Endothelial cell of umbilical vein (primary cell): ENCODE measurements at regions of chr2 and their contacts with region 1.

Region 1: DNA sequence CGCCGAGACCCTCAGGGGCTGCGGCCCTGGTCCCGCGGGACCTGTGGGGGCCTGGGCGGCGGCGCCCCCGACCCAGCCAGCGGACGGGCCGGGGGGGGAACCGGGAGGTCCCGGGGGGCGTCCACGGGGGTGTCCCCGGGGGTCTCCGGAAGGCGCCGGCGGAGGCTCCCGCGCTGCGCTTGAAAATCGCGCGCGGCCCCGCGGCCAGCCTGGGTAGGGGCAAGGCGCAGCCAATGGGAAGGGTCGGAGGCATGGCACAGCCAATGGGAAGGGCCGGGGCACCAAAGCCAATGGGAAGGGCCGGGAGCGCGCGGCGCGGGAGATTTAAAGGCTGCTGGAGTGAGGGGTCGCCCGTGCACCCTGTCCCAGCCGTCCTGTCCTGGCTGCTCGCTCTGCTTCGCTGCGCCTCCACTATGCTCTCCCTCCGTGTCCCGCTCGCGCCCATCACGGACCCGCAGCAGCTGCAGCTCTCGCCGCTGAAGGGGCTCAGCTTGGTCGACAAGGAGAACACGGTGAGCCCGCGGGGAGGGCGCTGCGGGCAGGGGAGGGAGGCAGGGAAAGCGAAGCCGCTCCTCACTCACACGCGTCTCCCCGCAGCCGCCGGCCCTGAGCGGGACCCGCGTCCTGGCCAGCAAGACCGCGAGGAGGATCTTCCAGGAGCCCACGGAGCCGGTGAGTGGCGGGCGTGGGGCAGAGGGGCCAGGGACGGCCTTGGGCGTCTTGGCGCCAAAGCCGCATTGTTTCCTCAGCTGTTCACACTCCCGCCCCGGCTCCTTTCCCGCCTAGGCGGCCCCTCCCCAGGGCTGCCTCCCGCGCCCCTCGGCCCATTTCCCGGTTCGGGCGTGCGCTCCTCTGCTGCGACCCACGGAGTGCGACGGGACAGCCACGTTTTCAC is at the start of gene RRM2:
- DNase-seq: peak; percentile 88
- H3K4me3 ChIP-seq: peak within 1 kb of the TSS; percentile 59 to 91 (median 70)
- H3K27ac ChIP-seq: peak within 1 kb of the TSS; percentile 60
- H3K4me1 ChIP-seq: peaks cover 53% of the 10 kb centered on the region
- H3K27me3 ChIP-seq: no peaks in the 10 kb centered on the region
- CTCF ChIP-seq: no peak
- POLR2A ChIP-seq: peak; percentile 93
- total RNA-seq, gene RRM2: 220 and 246 TPM in 2 replicates

Region 2: GRCh38 chr2:9830690-9831410 is 291.8 kb before region 1 on chr2:
- CTCF ChIA-PET with region 1: no interaction called
- POLR2A ChIA-PET with region 1: no interaction called
- dilution Hi-C with region 1: no loop called
- intact Hi-C with region 1: no loop called
- DNase-seq: no peak
- H3K4me3 ChIP-seq: no peak overlapping the region
- H3K27ac ChIP-seq: no peak overlapping the region
- H3K4me1 ChIP-seq: no peaks in the 10 kb centered on the region
- H3K27me3 ChIP-seq: peaks cover 11 to 15% of the 10 kb centered on the region in 2 experiments
- CTCF ChIP-seq: no peak
- POLR2A ChIP-seq: no peak

Region 3: DNA sequence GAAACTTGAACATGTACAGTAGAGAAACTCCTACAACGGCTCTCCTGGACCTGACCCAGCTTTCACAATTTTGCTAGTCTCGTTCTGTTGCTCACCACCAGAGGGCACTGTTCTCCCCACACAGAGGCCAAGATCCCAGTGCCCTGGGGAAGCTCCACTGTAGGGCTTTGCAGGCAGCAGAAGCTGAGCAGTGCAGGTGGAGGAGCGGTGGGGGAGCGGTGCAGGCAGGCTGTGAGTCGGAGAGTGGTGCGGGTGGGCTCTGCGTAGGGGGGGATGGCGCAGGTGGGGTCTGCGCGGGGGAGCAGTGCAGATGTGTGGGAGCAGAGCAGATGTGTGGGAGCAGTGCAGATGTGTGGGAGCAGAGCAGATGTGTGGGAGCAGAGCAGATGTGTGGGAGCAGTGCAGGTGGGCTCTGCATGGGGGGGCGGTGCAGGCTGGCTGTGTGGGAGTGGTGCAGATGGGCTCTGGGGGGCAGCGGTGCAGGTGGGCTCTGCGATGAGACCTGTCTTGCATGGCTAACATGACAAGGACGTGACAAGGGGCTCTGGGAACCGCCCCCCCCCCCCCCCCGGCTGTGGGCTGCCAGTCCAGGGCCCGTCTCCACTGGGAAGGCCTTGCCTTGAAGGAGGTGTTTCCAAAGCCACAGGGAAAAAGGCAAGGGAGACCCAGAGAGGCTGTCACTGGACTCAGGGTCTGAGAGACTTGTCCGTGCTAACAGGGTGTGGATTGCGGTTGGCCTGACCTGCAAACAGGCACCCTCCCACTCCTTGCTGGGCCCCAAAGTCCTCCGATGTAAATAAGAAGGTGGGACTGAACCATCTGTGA is 49.8 kb before region 1 on chr2:
- CTCF ChIA-PET with region 1: interaction called, 46 read pairs
- POLR2A ChIA-PET with region 1: interaction called, 3 read pairs
- dilution Hi-C with region 1: no loop called
- intact Hi-C with region 1: loop called (anchors 1 kb)
- DNase-seq: peak; percentile 76
- H3K4me3 ChIP-seq: no peak overlapping the region
- H3K27ac ChIP-seq: no peak overlapping the region
- H3K4me1 ChIP-seq: no peaks in the 10 kb centered on the region
- H3K27me3 ChIP-seq: peaks cover 11 to 14% of the 10 kb centered on the region in 2 experiments
- CTCF ChIP-seq: peak; percentile 87 to 90
- POLR2A ChIP-seq: no peak

Region 4: GRCh38 chr2:10135296-10136089 is 12.9 kb after region 1 on chr2:
- CTCF ChIA-PET with region 1: interaction called, 54 read pairs
- POLR2A ChIA-PET with region 1: interaction called, 4 read pairs
- dilution Hi-C with region 1: no loop called
- intact Hi-C with region 1: no loop called
- DNase-seq: no peak
- H3K4me3 ChIP-seq: no peak overlapping the region
- H3K27ac ChIP-seq: no peak overlapping the region
- H3K4me1 ChIP-seq: no peaks in the 10 kb centered on the region
- H3K27me3 ChIP-seq: no peaks in the 10 kb centered on the region
- CTCF ChIP-seq: no peak
- POLR2A ChIP-seq: peak; percentile 60

Region 5: GRCh38 chr2:10162586-10163497 is 40.2 kb after region 1 on chr2:
- CTCF ChIA-PET with region 1: interaction called, 57 read pairs
- POLR2A ChIA-PET with region 1: no interaction called
- dilution Hi-C with region 1: no loop called
- intact Hi-C with region 1: loop called (anchors 1 kb)
- DNase-seq: peak; percentile 26
- H3K4me3 ChIP-seq: no peak overlapping the region
- H3K27ac ChIP-seq: peak overlapping the region; percentile 97
- H3K4me1 ChIP-seq: peaks cover 57% of the 10 kb centered on the region
- H3K27me3 ChIP-seq: no peaks in the 10 kb centered on the region
- CTCF ChIP-seq: peak in 1 of 2 donors; percentile 18
- POLR2A ChIP-seq: no peak

Region 6: DNA sequence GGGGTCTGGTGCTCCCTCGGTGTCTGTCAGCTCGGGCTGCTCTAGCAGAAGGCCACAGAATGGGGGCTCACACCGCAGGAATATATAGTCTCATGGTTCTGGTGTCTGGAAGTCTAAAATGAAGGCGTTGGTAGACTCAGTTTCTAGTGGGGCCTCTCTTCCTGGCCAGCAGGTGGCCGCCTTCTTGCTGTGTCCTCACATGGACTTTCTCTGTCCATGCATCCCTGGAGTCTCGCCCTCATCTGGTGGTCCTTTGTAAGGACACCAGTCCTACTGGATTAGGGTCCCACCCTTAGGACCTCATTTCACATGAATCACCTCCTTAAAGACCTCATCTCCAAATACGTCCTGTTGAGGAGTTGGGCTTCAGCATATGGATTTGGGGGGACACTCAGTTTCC is 65.6 kb after region 1 on chr2:
- CTCF ChIA-PET with region 1: interaction called, 3 read pairs
- POLR2A ChIA-PET with region 1: no interaction called
- dilution Hi-C with region 1: no loop called
- intact Hi-C with region 1: loop called (anchors 1 kb)
- DNase-seq: peak; percentile 33
- H3K4me3 ChIP-seq: no peak overlapping the region
- H3K27ac ChIP-seq: no peak overlapping the region
- H3K4me1 ChIP-seq: no peaks in the 10 kb centered on the region
- H3K27me3 ChIP-seq: no peaks in the 10 kb centered on the region
- CTCF ChIP-seq: peak; percentile 52 to 66
- POLR2A ChIP-seq: no peak

Region 7: GRCh38 chr2:10302479-10303180 is 180.0 kb after region 1 on chr2 and contains the start of gene HPCAL1:
- CTCF ChIA-PET with region 1: interaction called, 52 read pairs
- POLR2A ChIA-PET with region 1: interaction called, 4 read pairs
- dilution Hi-C with region 1: no loop called
- intact Hi-C with region 1: loop called (anchors 2 kb)
- DNase-seq: peak; percentile 81
- H3K4me3 ChIP-seq: peak within 1 kb of the TSS; percentile 67 to 78 (median 72)
- H3K27ac ChIP-seq: peak within 1 kb of the TSS; percentile 27
- H3K4me1 ChIP-seq: peaks cover 22% of the 10 kb centered on the region
- H3K27me3 ChIP-seq: no peaks in the 10 kb centered on the region
- CTCF ChIP-seq: peak; percentile 26 to 53
- POLR2A ChIP-seq: peak; percentile 89
- total RNA-seq, gene HPCAL1: 68.1 and 77.4 TPM in 2 replicates

Region 8: GRCh38 chr2:10575609-10576280 is 453.1 kb after region 1 on chr2:
- CTCF ChIA-PET with region 1: no interaction called
- POLR2A ChIA-PET with region 1: no interaction called
- dilution Hi-C with region 1: no loop called
- intact Hi-C with region 1: loop called (anchors 10 kb)
- DNase-seq: peak; percentile 82
- H3K4me3 ChIP-seq: no peak overlapping the region
- H3K27ac ChIP-seq: peak overlapping the region; percentile 89
- H3K4me1 ChIP-seq: peaks cover 20% of the 10 kb centered on the region
- H3K27me3 ChIP-seq: no peaks in the 10 kb centered on the region
- CTCF ChIP-seq: no peak
- POLR2A ChIP-seq: no peak